ENCODE measurements at regions of chr17 and their contacts with region 1.

Region 1: DNA sequence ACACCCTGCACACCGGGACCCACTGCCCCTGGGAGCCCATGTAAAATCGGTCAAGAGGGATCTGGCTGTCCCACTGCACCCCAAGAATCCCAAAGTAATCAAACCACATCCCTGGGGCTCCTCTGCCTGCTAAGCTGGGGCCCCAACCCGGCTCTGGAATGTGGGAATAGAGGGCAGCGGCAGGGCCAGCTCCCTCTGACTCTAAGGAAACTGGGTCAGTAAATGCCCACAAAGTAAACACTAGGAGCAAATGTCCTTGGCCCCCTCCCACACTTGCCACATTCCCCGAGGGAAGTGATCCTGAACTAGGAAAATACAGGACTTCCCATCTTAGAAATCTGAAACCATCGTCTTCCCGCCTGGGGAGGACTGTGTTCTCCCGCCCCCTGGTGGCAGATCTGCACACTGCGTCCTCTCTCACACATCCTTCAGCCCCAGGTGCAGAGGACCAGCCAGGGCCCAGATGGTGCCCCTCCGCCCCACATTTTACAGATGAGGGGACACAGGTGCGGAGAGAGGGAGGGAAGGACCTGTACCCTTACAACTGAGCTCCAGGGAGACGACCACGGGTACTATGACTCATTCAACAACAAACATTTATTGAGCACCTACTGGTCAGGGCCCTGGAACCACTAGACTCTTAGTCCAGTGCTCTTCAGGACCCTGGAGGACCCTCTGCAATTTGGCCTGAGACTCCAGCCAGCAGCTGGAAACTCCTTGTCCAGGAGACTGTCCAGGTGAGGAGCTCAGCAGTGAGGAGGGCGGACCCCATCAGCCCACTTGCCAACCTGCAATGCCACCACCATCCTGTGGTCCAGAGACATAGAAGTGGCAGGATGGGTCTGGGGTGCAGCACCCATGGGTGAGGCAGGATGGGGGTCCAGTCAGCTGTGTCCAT is 10.1 kb downstream of the P3H4 start:
- DNase-seq: peak; percentile 56
- ATAC-seq: peak; percentile 64
- H3K4me3 ChIP-seq: peak overlapping the region; percentile 32 to 39
- H3K27ac ChIP-seq: peak overlapping the region; percentile 82
- H3K4me1 ChIP-seq: peaks cover 26 to 40% of the 10 kb centered on the region in 2 experiments
- H3K27me3 ChIP-seq: no peaks in the 10 kb centered on the region
- CTCF ChIP-seq: peak; percentile 92 to 96 (median 95)
- POLR2A ChIP-seq: no peak
- RAD21 ChIP-seq: peak; percentile 99

Region 2: GRCh38 chr17:41777574-41778188 is 23.9 kb before region 1 on chr17:
- CTCF ChIA-PET with region 1: interaction called, 6 read pairs
- POLR2A ChIA-PET with region 1: interaction called, 8 read pairs
- RAD21 ChIA-PET with region 1: interaction called in 1 of 2 experiments, 3 read pairs
- intact Hi-C with region 1: loop called (anchors 2 kb)
- DNase-seq: no peak
- ATAC-seq: peak; percentile 22
- H3K4me3 ChIP-seq: no peak overlapping the region
- H3K27ac ChIP-seq: peak overlapping the region; percentile 86
- H3K4me1 ChIP-seq: peaks cover 76 to 91% of the 10 kb centered on the region in 2 experiments
- H3K27me3 ChIP-seq: no peaks in the 10 kb centered on the region
- CTCF ChIP-seq: no peak
- POLR2A ChIP-seq: no peak
- RAD21 ChIP-seq: no peak

Region 3: GRCh38 chr17:41786227-41787020 is 15.2 kb before region 1 on chr17 and contains the start of gene JUP:
- CTCF ChIA-PET with region 1: interaction called, 109 read pairs
- POLR2A ChIA-PET with region 1: interaction called, 77 read pairs
- RAD21 ChIA-PET with region 1: interaction called, 12 to 13 read pairs
- intact Hi-C with region 1: loop called (anchors 1 kb)
- DNase-seq: peak; percentile 99
- ATAC-seq: peak; percentile 94
- H3K4me3 ChIP-seq: peak within 1 kb of the TSS; percentile 78 to 80
- H3K27ac ChIP-seq: peak within 1 kb of the TSS; percentile 95
- H3K4me1 ChIP-seq: peaks cover 35 to 60% of the 10 kb centered on the region in 2 experiments
- H3K27me3 ChIP-seq: no peaks in the 10 kb centered on the region
- CTCF ChIP-seq: peak in 2 of 3 experiments; percentile 71 to 75; a peak in 5 of 6 replicates
- POLR2A ChIP-seq: peak; percentile 45
- RAD21 ChIP-seq: peak; percentile 46; the same call in 1 of the 2 replicates
- total RNA-seq, gene JUP: 224 TPM

Region 4: DNA sequence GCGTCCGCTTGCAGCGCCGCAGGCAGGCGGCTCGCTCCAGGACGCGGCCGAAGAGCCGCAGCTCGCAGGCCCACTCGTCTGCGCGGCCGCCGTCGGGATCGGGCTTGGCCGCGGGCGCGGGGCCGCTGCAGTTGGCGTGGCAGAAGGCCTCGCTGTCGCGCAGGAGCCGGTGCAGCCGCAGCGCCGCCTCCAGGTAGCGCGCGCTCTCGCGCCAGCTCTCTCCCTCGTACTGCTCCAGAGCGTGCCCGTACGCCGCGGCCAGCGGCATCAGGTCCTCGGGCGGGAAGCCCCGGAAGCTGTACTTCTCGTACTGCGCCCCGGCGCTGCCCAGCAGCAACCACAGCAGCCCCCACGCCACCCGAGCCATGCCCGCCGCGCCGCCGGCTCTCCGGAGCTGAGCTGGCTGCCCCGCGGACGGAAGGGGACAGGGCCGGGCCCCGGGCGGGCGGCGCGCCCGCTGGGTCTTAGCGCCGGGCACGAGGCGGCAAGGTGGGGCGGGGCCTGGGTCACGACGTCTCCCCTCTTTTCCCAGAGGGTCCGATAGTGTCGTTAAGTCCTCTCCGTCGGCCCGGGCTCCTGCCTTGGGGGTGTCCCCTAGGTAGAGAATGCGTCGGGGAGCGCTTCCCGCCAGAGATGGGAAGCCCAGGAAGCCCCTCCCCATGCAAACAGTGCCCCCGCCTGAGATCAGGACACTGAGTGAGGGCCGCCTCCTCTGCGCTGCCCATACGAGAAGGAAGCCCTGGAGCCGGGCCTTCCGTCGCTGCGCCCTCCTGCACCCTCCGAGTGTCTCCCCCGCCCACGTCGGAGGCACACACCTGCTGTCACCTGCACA is 10.1 kb after region 1 on chr17 and contains the start of gene P3H4:
- CTCF ChIA-PET with region 1: interaction called, 25 read pairs
- POLR2A ChIA-PET with region 1: interaction called, 4 read pairs
- RAD21 ChIA-PET with region 1: no interaction called
- intact Hi-C with region 1: no loop called
- DNase-seq: peak; percentile 44
- ATAC-seq: peak; percentile 81
- H3K4me3 ChIP-seq: peak within 1 kb of the TSS; percentile 66 to 72
- H3K27ac ChIP-seq: peak within 1 kb of the TSS; percentile 97
- H3K4me1 ChIP-seq: peaks cover 10 to 41% of the 10 kb centered on the region in 2 experiments; a peak in 3 of 4 replicates
- H3K27me3 ChIP-seq: no peaks in the 10 kb centered on the region
- CTCF ChIP-seq: peak in 2 of 3 experiments; percentile 51 to 64; a peak in 4 of 6 replicates
- POLR2A ChIP-seq: peak; percentile 39
- RAD21 ChIP-seq: no peak; the same call in 1 of the 2 replicates
- total RNA-seq, gene P3H4: 23.4 TPM

Measured in HCT116 (cell line).